SK-N-SH (cell line): ENCODE measurements at regions of chr6 and their contacts with region 1.

Region 1: GRCh38 chr6:163416557-163417253 is 2.2 kb downstream of the QKI start:
- DNase-seq: no peak
- H3K4me3 ChIP-seq: peak overlapping the region; percentile 87 to 89
- H3K27ac ChIP-seq: peak overlapping the region; percentile 76 to 82
- H3K4me1 ChIP-seq: peaks cover 11 to 26% of the 10 kb centered on the region in 2 experiments; a peak in 2 of 4 replicates
- H3K27me3 ChIP-seq: no peaks in the 10 kb centered on the region
- CTCF ChIP-seq: peak; percentile 79
- EP300 ChIP-seq: 0 out of 4 replicates have a peak, but pooled peaks of 1 of the 2 experiments have one; percentile 22
- RAD21 ChIP-seq: peak; percentile 75

Region 2: DNA sequence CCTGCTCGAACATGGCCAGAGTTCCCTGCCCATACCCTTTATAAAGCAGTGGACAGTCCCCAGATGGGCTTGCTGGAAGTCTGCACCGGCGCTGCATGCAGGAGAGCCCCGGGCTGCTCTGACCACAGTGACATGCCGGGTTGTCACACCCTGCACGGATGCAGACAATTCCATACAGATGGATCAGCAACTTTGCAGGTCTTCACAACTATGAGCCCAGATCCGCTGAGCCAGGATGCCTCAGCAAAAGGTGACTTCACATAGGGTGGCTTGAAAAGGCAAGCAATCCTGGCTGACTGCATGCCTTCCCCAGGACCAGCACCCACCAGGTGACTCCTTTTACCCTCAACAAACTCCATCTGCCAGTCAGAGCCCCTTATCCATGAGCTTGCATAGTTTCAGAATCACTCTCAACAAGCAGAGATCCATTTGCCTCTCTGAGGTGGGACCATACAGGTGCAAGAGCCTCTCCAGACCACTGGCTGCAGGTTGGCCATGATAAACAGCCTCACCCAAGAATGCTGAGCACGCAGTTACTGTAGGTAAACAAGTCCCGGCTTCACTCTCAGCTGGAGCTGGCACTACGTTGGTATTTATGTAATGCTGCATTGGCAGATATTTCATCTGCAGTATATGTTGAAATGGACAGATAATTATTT is 185.2 kb before region 1 on chr6:
- CTCF ChIA-PET with region 1: no interaction called
- POLR2A ChIA-PET with region 1: no interaction called
- DNase-seq: no peak
- H3K4me3 ChIP-seq: no peak overlapping the region
- H3K27ac ChIP-seq: no peak overlapping the region
- H3K4me1 ChIP-seq: no peaks in the 10 kb centered on the region
- H3K27me3 ChIP-seq: no peaks in the 10 kb centered on the region
- CTCF ChIP-seq: no peak
- EP300 ChIP-seq: no peak
- RAD21 ChIP-seq: no peak

Region 3: DNA sequence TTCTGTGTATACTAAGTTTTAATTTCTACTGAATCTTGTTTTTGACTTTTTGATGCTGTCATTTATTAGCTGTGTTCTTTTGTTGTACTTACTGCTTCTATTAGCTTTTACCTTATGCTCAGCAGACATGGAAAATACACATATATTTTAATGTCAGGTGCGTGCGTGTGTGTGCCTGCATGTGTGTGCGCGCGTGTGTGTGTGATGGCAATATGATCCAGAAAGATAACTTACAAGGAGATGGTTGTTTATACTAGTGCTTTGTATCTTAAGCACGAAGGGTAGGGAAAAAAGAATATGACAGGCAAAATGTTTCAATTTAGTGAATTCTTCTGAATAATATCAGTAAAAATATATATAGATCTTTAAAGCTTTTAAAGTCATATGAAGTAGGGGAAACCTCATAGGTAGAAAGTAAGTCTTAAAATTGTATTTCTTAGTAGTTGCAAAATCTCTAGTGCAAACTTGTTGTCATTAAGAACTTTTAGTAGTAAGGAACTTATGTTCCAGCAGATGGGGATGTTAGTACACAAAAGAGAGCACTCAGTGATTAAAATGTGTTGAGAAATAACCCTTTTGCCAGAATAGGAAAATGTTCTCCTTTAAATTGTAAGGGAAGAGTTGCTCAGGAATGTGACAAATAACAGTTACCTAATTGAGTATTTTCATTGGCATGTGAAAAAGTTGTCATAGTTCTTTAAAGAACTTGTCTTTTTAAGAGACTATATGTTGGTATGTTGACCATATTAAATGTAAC is 11.0 kb after region 1 on chr6:
- CTCF ChIA-PET with region 1: interaction called, 12 read pairs
- POLR2A ChIA-PET with region 1: no interaction called
- DNase-seq: no peak
- H3K4me3 ChIP-seq: no peak overlapping the region
- H3K27ac ChIP-seq: no peak overlapping the region
- H3K4me1 ChIP-seq: peaks cover 4 to 40% of the 10 kb centered on the region in 2 experiments; a peak in 3 of 4 replicates
- H3K27me3 ChIP-seq: no peaks in the 10 kb centered on the region
- CTCF ChIP-seq: peak; percentile 61
- EP300 ChIP-seq: no peak
- RAD21 ChIP-seq: peak; percentile 82

Region 4: GRCh38 chr6:163956571-163957407 is 540.1 kb after region 1 on chr6:
- CTCF ChIA-PET with region 1: interaction called, 13 read pairs
- POLR2A ChIA-PET with region 1: no interaction called
- DNase-seq: peak; percentile 80
- H3K4me3 ChIP-seq: no peak overlapping the region; a peak in 1 of 4 replicates
- H3K27ac ChIP-seq: no peak overlapping the region
- H3K4me1 ChIP-seq: no peaks in the 10 kb centered on the region
- H3K27me3 ChIP-seq: no peaks in the 10 kb centered on the region
- CTCF ChIP-seq: peak; percentile 73
- EP300 ChIP-seq: no peak
- RAD21 ChIP-seq: peak; percentile 89